Activated CD8-positive, alpha-beta T cell treated with anti-CD3 and anti-CD28 coated beads, Interleukin-2, amount 10 ng/mL, durations not matched to agents 7 days and 5 days (primary cell): ENCODE measurements at regions of chr3 and their contacts with region 1.

Region 1: GRCh38 chr3:133487920-133488540 is 85.5 kb upstream of the CDV3 start:
- DNase-seq: peak; percentile 65
- ATAC-seq: no peak
- H3K4me3 Mint-ChIP-seq: no peak overlapping the region
- H3K27ac Mint-ChIP-seq: no peak overlapping the region
- H3K4me1 Mint-ChIP-seq: peaks cover 55% of the 10 kb centered on the region
- H3K27me3 Mint-ChIP-seq: no peaks in the 10 kb centered on the region

Region 2: GRCh38 chr3:133457465-133458067 is 30.5 kb before region 1 on chr3:
- CTCF ChIA-PET with region 1: interaction called, 12 read pairs
- POLR2A ChIA-PET with region 1: no interaction called
- DNase-seq: no peak
- ATAC-seq: no peak
- H3K4me3 Mint-ChIP-seq: no peak overlapping the region
- H3K27ac Mint-ChIP-seq: no peak overlapping the region
- H3K4me1 Mint-ChIP-seq: peaks cover 13% of the 10 kb centered on the region
- H3K27me3 Mint-ChIP-seq: no peaks in the 10 kb centered on the region

Region 3: GRCh38 chr3:133464573-133464972 is 23.5 kb before region 1 on chr3:
- CTCF ChIA-PET with region 1: interaction called, 21 read pairs
- POLR2A ChIA-PET with region 1: interaction called, 3 read pairs
- DNase-seq: no peak
- ATAC-seq: no peak
- H3K4me3 Mint-ChIP-seq: no peak overlapping the region
- H3K27ac Mint-ChIP-seq: no peak overlapping the region
- H3K4me1 Mint-ChIP-seq: peaks cover 46% of the 10 kb centered on the region
- H3K27me3 Mint-ChIP-seq: no peaks in the 10 kb centered on the region

Region 4: GRCh38 chr3:133475245-133476010 is 12.6 kb before region 1 on chr3:
- CTCF ChIA-PET with region 1: interaction called, 39 read pairs
- POLR2A ChIA-PET with region 1: interaction called, 3 read pairs
- DNase-seq: peak; percentile 50
- ATAC-seq: peak; percentile 91
- H3K4me3 Mint-ChIP-seq: no peak overlapping the region
- H3K27ac Mint-ChIP-seq: peak overlapping the region; percentile 53
- H3K4me1 Mint-ChIP-seq: peaks cover 57% of the 10 kb centered on the region
- H3K27me3 Mint-ChIP-seq: no peaks in the 10 kb centered on the region

Region 5: DNA sequence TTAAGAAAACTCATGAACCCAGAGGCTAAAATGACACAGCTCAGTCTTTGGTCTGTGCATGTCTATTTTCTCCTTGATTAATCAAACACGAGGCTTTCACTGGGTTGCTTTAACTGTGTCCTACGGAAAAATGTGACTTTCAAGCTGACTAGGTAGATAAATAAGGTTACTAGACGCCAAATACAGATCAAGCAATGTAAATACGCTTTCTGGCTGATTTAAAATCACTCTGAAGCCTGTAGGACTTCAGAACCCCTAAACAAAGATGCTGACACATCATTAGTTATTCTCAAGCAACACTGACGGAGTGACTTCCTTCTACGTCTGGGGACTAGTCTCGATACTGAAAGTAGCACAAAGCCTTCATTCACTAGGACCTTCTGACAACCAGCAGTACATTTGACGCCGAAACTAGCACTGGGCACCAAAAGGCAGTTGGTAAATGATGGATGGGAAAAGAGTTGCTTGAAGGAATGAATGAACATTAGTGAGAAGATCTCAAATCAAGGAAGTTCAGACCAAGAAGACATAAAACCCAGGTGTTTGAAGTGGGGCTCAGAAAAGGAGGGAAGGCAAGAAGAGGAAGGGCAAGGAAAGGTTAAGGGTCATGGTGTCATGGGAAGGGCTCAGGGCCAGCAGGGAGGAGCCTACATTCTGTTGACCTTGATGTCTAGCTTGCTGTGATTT is 18.3 kb after region 1 on chr3:
- CTCF ChIA-PET with region 1: interaction called, 18 read pairs
- POLR2A ChIA-PET with region 1: interaction called, 11 read pairs
- DNase-seq: peak; percentile 62
- ATAC-seq: peak; percentile 98
- H3K4me3 Mint-ChIP-seq: peak overlapping the region; percentile 52
- H3K27ac Mint-ChIP-seq: peak overlapping the region; percentile 92
- H3K4me1 Mint-ChIP-seq: peaks cover 18% of the 10 kb centered on the region
- H3K27me3 Mint-ChIP-seq: no peaks in the 10 kb centered on the region

Region 6: DNA sequence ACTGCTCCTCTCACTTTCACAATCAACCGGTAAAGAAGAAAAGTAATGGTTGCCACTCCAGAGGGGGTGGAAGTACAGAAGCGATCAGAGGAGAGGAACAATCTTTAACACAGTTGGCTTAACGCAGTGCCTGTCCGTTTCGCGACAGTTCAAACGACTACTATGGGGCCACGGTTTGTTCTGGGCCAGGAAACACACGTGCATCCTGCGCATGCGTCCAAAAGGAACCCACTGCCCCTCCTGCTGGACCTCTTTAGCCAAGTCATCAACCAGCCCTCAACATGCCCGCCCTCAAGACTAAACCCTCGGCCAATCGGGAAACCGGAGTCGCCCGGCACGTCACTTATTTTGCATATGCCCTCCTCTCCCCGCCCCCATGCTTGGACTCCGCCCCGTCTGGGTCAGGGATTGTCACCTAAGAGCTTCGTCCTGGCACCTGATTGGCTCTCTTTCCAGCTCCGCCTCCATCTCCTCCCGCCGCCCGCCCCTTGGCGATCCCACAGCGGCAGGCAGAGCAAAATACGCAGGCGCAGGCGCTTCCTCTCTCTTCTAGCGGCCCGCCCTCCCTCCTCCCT is 85.1 kb after region 1 on chr3:
- CTCF ChIA-PET with region 1: interaction called, 102 read pairs
- POLR2A ChIA-PET with region 1: interaction called, 95 read pairs
- DNase-seq: peak; percentile 100
- ATAC-seq: peak; percentile 86
- H3K4me3 Mint-ChIP-seq: peak overlapping the region; percentile 82
- H3K27ac Mint-ChIP-seq: peak overlapping the region; percentile 99
- H3K4me1 Mint-ChIP-seq: peaks cover 50% of the 10 kb centered on the region
- H3K27me3 Mint-ChIP-seq: no peaks in the 10 kb centered on the region

Region 7: GRCh38 chr3:133578548-133579191 is 90.6 kb after region 1 on chr3:
- CTCF ChIA-PET with region 1: interaction called, 102 read pairs
- POLR2A ChIA-PET with region 1: interaction called, 95 read pairs
- DNase-seq: no peak
- ATAC-seq: no peak
- H3K4me3 Mint-ChIP-seq: peak overlapping the region; percentile 68
- H3K27ac Mint-ChIP-seq: peak overlapping the region; percentile 74
- H3K4me1 Mint-ChIP-seq: peaks cover 47% of the 10 kb centered on the region
- H3K27me3 Mint-ChIP-seq: no peaks in the 10 kb centered on the region

Region 8: GRCh38 chr3:133595341-133595740 is 107.3 kb after region 1 on chr3:
- CTCF ChIA-PET with region 1: no interaction called
- POLR2A ChIA-PET with region 1: no interaction called
- DNase-seq: no peak
- ATAC-seq: peak; percentile 32
- H3K4me3 Mint-ChIP-seq: no peak overlapping the region
- H3K27ac Mint-ChIP-seq: no peak overlapping the region
- H3K4me1 Mint-ChIP-seq: peaks cover 7% of the 10 kb centered on the region
- H3K27me3 Mint-ChIP-seq: no peaks in the 10 kb centered on the region

Region 9: DNA sequence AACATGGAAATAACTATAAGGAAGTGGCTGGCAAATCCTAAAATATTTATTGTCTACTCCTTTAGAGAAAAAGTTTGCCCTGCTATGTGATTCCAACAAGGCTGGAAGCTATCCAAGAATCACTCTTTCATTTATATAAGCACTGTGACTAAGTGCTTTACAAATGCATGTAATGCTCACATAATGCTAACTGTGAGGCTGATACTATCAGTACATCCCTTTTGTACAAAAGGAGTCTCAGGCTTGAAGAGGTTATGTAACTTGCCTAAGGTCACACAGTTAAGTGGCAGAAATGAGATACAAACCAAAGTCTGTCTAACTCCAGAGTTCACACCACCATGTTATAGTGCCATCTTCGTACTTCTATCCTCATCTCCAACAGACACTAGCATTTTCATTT is 156.7 kb after region 1 on chr3:
- CTCF ChIA-PET with region 1: no interaction called
- POLR2A ChIA-PET with region 1: no interaction called
- DNase-seq: no peak
- ATAC-seq: no peak
- H3K4me3 Mint-ChIP-seq: no peak overlapping the region
- H3K27ac Mint-ChIP-seq: no peak overlapping the region
- H3K4me1 Mint-ChIP-seq: peaks cover 8% of the 10 kb centered on the region
- H3K27me3 Mint-ChIP-seq: no peaks in the 10 kb centered on the region